ENCODE measurements at regions of chr14 and their contacts with region 1.

Region 1: GRCh38 chr14:62117010-62117750 is 355.0 kb downstream of the SNAPC1 start:
- DNase-seq: peak; percentile 75 to 97 (median 90)

Region 2: GRCh38 chr14:61812761-61813606 is 304.2 kb before region 1 on chr14:
- intact Hi-C with region 1: no loop called
- DNase-seq: peak in 32 of 42 donors; percentile 4 to 51 (median 20)

Region 3: GRCh38 chr14:61894452-61895077 is 222.6 kb before region 1 on chr14:
- intact Hi-C with region 1: loop called (anchors 10 kb)
- DNase-seq: peak; percentile 53 to 91 (median 74)

Region 4: GRCh38 chr14:62308891-62309290 is 191.7 kb after region 1 on chr14:
- intact Hi-C with region 1: no loop called
- DNase-seq: no peak